ENCODE measurements at regions of chr16 and their contacts with region 1.

Region 1: GRCh38 chr16:2752035-2752849 is at the start of gene SRRM2:
- DNase-seq: peak; percentile 72
- H3K4me3 ChIP-seq: peak within 1 kb of the TSS; percentile 81
- CTCF ChIP-seq: no peak

Region 2: DNA sequence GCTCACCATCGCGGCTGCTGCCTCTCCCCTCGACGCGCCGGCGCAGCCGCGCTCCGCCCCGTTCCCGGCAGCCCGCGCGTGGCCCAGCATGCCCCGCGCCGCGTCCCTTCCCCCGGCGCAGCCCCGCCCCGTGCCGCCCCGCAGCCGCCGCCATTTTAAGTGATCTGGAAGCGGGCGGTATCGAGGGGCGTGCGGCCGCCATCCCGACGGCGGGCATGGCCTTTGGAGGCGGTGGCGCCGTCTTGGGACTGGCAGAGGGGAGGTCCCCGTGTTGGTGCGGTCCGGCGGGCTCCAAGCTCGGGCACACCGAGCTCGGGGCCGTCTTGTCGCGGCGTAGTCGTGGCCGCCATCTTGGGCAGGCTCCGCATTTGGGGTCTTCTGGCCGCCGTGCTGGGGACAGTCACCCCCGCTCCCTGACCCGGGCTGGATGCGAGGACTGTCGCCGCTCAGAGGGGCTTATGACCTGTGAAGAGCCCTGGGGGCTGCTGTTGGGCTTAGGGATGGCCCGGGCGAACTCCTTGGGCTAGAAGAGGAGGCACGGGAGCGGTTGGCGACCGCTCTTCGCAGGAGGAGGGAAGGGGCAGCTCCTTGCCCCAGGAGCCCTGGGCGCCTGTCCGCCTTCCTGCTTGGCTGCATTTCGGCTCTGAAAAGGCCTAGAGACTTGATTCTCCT is 25.1 kb after region 1 on chr16 and contains the start of gene ELOB:
- CTCF ChIA-PET with region 1: interaction called, 3 read pairs
- POLR2A ChIA-PET with region 1: interaction called, 12 read pairs
- DNase-seq: no peak
- H3K4me3 ChIP-seq: peak within 1 kb of the TSS; percentile 96
- CTCF ChIP-seq: no peak